ENCODE measurements at regions of chr11 and their contacts with region 1.

Region 1: DNA sequence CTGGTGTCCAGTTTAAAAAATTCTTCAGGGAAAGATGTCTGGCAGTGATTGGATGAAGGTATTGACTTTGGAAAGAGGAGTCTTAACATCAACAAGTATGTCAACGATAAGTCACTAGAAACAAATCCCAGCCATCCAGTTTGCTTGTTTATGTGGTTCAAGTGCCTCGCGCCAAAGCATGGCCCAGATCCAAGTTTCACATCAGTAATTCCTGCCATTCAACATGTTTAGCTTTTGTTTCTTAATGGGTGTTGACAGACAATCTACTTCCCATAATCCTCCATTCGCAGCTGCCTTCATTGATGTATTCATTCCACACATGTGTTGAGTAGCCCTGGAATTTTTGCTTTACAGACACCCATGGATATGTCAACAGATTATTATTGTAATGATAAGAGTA is 77.8 kb downstream of the UBASH3B start:
- DNase-seq: peak in 8 of 42 donors; percentile 19 to 50 (median 28)

Region 2: GRCh38 chr11:122671400-122671891 is 61.9 kb before region 1 on chr11:
- intact Hi-C with region 1: loop called (anchors 10 kb)
- DNase-seq: no peak

Region 3: GRCh38 chr11:123577081-123577598 is 843.8 kb after region 1 on chr11:
- intact Hi-C with region 1: no loop called
- DNase-seq: peak; percentile 47 to 92 (median 82)

Measured in head of caudate nucleus (tissue), 42 donors.